ENCODE measurements at regions of chr7 and their contacts with region 1.

Region 1: DNA sequence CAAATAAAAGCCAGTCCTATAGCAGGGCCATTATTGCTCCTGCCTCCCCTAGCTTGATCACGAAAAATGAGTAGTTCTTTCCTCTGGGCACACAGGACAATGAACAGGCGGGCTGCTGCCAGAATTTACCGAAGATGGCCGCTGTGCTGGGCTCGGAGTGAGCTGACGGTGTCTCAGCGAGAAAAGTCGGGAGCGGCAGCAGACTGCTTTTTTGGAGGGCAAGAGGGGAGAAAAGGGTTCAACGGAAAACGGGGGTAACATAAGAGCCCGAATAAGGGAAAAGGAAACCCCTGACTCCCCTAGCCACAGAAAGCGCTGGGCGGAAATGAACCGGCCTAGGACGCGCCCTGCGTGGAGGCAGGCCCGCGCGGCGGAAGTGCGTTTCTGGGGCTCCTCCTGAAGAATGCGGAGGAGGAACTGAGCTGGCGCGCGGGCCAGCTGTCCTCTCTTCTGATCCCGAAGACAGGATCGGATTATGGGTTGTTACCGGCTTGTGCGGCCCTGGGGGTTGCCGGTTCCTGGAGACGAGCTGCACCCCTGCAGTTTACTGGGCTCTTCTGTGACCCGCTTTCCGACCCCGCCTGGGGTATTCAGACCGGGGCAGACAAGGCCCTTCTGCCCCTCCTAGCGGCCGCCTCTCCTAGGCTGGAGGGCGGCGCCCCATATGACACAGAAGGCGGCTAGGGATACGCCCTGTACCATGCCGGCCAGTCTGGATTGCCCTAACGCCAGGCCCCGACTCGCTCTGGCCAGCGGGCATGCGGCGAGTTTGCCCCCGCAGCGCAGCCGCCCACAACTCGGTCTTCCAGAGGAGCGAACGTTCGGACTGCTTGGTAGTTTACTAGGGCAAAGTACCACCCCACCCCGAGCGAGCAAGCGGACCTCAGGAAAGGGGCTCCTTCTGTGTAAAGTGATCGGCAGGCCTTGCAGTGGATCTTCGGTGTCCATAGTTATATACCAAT is 30.1 kb upstream of the KMT2E start:
- DNase-seq: peak; percentile 92 to 93
- ATAC-seq: peak; percentile 97
- H3K4me3 ChIP-seq: peak overlapping the region; percentile 55
- H3K27ac ChIP-seq: peak overlapping the region; percentile 91 to 97
- H3K4me1 ChIP-seq: peaks cover 43% of the 10 kb centered on the region
- CTCF ChIP-seq: peak; percentile 32; the same call in 2 of the 3 replicates
- EP300 ChIP-seq: no peak
- POLR2A ChIP-seq: peak; percentile 63
- RAD21 ChIP-seq: peak in 1 of 2 experiments; percentile 39; a peak in 3 of 5 replicates

Region 2: DNA sequence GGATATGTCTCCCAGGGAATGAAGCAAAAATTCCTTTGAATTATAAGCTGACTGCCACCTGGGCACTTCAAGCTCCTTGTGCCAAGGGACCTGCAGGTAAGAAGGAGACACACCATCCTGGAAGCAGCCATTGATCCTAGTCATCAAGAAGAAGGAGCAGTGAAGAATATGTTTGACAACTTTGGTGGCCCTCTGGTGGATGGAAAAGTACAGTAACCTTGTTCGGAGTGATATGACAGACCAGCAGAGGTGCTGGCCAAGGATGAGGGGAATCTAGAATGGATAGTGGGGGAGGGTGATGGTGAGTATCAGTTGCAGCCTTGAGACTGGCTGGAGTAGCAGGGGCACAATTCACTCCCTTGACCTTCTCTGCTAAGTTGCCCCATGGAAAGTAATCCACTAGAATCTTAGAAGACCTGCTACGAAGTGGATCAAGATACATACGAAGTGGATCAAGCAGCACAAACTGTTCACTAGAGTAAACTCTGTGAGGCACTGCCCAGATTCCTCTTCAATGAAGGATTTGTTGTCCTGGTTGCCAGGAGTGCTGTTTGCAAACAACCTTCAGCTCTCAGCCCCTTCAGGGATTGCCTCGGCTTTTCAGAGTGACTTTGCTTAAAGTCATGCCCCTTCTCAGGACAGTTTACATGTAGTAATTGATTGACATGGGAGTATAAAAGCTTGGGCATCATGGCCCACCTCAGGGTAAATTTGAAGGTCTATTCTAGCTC is 731.3 kb before region 1 on chr7:
- CTCF ChIA-PET with region 1: no interaction called
- POLR2A ChIA-PET with region 1: no interaction called
- DNase-seq: peak; percentile 18 to 35
- ATAC-seq: peak; percentile 86 to 89
- H3K4me3 ChIP-seq: no peak overlapping the region
- H3K27ac ChIP-seq: no peak overlapping the region
- H3K4me1 ChIP-seq: no peaks in the 10 kb centered on the region
- CTCF ChIP-seq: 0 out of 3 replicates have a peak, but pooled peaks have one; percentile 9
- EP300 ChIP-seq: no peak
- POLR2A ChIP-seq: no peak
- RAD21 ChIP-seq: 0 out of 5 replicates have a peak, but pooled peaks of 1 of the 2 experiments have one; percentile 20

Region 3: GRCh38 chr7:104857458-104858425 is 126.1 kb before region 1 on chr7:
- CTCF ChIA-PET with region 1: no interaction called
- POLR2A ChIA-PET with region 1: no interaction called
- DNase-seq: no peak
- ATAC-seq: no peak
- H3K4me3 ChIP-seq: no peak overlapping the region
- H3K27ac ChIP-seq: no peak overlapping the region
- H3K4me1 ChIP-seq: no peaks in the 10 kb centered on the region
- CTCF ChIP-seq: no peak
- EP300 ChIP-seq: no peak
- POLR2A ChIP-seq: no peak
- RAD21 ChIP-seq: no peak

Region 4: GRCh38 chr7:104971290-104972071 is 12.4 kb before region 1 on chr7:
- CTCF ChIA-PET with region 1: interaction called, 22 read pairs
- POLR2A ChIA-PET with region 1: interaction called, 7 read pairs
- DNase-seq: peak in 1 of 2 experiments; percentile 35
- ATAC-seq: peak; percentile 48 to 55; a peak in 3 of 6 replicates
- H3K4me3 ChIP-seq: no peak overlapping the region
- H3K27ac ChIP-seq: no peak overlapping the region
- H3K4me1 ChIP-seq: no peaks in the 10 kb centered on the region
- CTCF ChIP-seq: no peak
- EP300 ChIP-seq: no peak
- POLR2A ChIP-seq: no peak
- RAD21 ChIP-seq: no peak

Region 5: GRCh38 chr7:105003275-105003674 is 19.4 kb after region 1 on chr7:
- CTCF ChIA-PET with region 1: interaction called, 7 read pairs
- POLR2A ChIA-PET with region 1: interaction called, 132 read pairs
- DNase-seq: peak in 1 of 2 experiments; percentile 44
- ATAC-seq: peak; percentile 83 to 86
- H3K4me3 ChIP-seq: no peak overlapping the region
- H3K27ac ChIP-seq: peak overlapping the region; percentile 3 to 63; a peak in 3 of 6 replicates
- H3K4me1 ChIP-seq: peaks cover 83% of the 10 kb centered on the region
- CTCF ChIP-seq: no peak
- EP300 ChIP-seq: no peak
- POLR2A ChIP-seq: no peak
- RAD21 ChIP-seq: no peak

Region 6: GRCh38 chr7:105013221-105013815 is 29.5 kb after region 1 on chr7:
- CTCF ChIA-PET with region 1: interaction called, 13 read pairs
- POLR2A ChIA-PET with region 1: interaction called, 132 read pairs
- DNase-seq: peak; percentile 92 to 93
- ATAC-seq: peak; percentile 82 to 83
- H3K4me3 ChIP-seq: peak overlapping the region; percentile 90
- H3K27ac ChIP-seq: peak overlapping the region; percentile 99 to 100
- H3K4me1 ChIP-seq: peaks cover 49% of the 10 kb centered on the region
- CTCF ChIP-seq: 0 out of 3 replicates have a peak, but pooled peaks have one; percentile 15
- EP300 ChIP-seq: no peak
- POLR2A ChIP-seq: peak; percentile 96
- RAD21 ChIP-seq: no peak

Region 7: GRCh38 chr7:105046414-105046813 is 62.6 kb after region 1 on chr7:
- CTCF ChIA-PET with region 1: interaction called, 19 read pairs
- POLR2A ChIA-PET with region 1: no interaction called
- DNase-seq: no peak
- ATAC-seq: peak in 1 of 2 experiments; percentile 55; a peak in 2 of 6 replicates
- H3K4me3 ChIP-seq: no peak overlapping the region
- H3K27ac ChIP-seq: no peak overlapping the region
- H3K4me1 ChIP-seq: peaks cover 19% of the 10 kb centered on the region
- CTCF ChIP-seq: no peak
- EP300 ChIP-seq: no peak
- POLR2A ChIP-seq: no peak
- RAD21 ChIP-seq: no peak

Measured in A549 (cell line).